ENCODE measurements at regions of chr20 and their contacts with region 1.

Region 1: DNA sequence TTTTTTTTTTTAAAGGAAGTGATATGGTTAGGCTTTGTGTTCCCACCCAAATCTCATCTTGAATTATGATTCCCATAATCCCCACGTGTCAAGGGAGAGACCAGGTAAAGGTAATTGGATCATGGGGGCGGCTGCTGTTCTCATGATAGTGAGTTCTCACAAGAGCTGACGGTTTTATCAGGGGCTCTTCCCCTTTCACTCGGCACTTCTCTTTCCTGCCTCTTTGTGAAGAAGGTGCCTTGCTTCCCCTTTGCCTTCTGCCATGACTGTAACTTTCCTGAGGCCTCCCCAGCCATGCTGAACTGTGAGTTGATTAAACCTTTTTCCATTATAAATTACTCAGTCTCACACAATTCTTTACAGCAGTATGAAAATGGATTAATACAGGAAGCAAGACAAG is 64.3 kb downstream of the ZFP64 start:
- DNase-seq: no peak
- ATAC-seq: no peak
- H3K4me3 Mint-ChIP-seq: no peak overlapping the region
- H3K27ac Mint-ChIP-seq: no peak overlapping the region
- H3K4me1 Mint-ChIP-seq: peaks cover 2% of the 10 kb centered on the region
- H3K27me3 Mint-ChIP-seq: no peaks in the 10 kb centered on the region

Region 2: GRCh38 chr20:52096117-52096516 is 31.2 kb before region 1 on chr20:
- CTCF ChIA-PET with region 1: no interaction called
- POLR2A ChIA-PET with region 1: no interaction called
- intact Hi-C with region 1: no loop called
- DNase-seq: no peak
- ATAC-seq: no peak
- H3K4me3 Mint-ChIP-seq: no peak overlapping the region
- H3K27ac Mint-ChIP-seq: no peak overlapping the region
- H3K4me1 Mint-ChIP-seq: no peaks in the 10 kb centered on the region
- H3K27me3 Mint-ChIP-seq: no peaks in the 10 kb centered on the region

Region 3: GRCh38 chr20:52150440-52151258 is 23.3 kb after region 1 on chr20:
- CTCF ChIA-PET with region 1: interaction called, 15 read pairs
- POLR2A ChIA-PET with region 1: no interaction called
- intact Hi-C with region 1: loop called (anchors 1 kb)
- DNase-seq: peak; percentile 33
- ATAC-seq: peak; percentile 53
- H3K4me3 Mint-ChIP-seq: no peak overlapping the region
- H3K27ac Mint-ChIP-seq: no peak overlapping the region
- H3K4me1 Mint-ChIP-seq: no peaks in the 10 kb centered on the region
- H3K27me3 Mint-ChIP-seq: no peaks in the 10 kb centered on the region

Region 4: DNA sequence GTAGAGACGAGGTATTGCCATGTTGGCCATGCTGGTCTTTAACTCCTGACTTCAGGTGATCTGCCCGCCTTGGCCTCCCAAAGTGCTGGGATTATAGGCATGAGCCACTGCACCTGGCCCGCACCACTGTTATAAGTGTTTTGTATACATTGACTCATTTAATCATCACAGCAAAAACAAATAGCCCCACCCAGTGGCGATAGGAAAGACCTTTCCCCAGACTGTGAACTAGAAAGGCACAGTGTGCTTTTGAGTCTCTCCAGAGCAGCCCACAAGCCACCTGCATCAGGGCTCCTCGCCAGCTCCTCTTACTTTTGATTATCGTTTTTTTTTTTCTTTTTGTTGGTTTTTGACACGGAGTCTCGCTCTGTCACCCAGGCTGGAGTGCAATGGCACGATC is 92.1 kb after region 1 on chr20:
- CTCF ChIA-PET with region 1: no interaction called
- POLR2A ChIA-PET with region 1: no interaction called
- intact Hi-C with region 1: loop called in 1 of 2 experiments (anchors 2 kb)
- DNase-seq: peak; percentile 9
- ATAC-seq: no peak
- H3K4me3 Mint-ChIP-seq: no peak overlapping the region
- H3K27ac Mint-ChIP-seq: no peak overlapping the region
- H3K4me1 Mint-ChIP-seq: no peaks in the 10 kb centered on the region
- H3K27me3 Mint-ChIP-seq: peaks cover 9% of the 10 kb centered on the region

Region 5: GRCh38 chr20:52379723-52380336 is 252.5 kb after region 1 on chr20:
- CTCF ChIA-PET with region 1: no interaction called
- POLR2A ChIA-PET with region 1: no interaction called
- intact Hi-C with region 1: loop called in 1 of 2 experiments (anchors 1 kb)
- DNase-seq: peak; percentile 54
- ATAC-seq: no peak
- H3K4me3 Mint-ChIP-seq: no peak overlapping the region
- H3K27ac Mint-ChIP-seq: no peak overlapping the region
- H3K4me1 Mint-ChIP-seq: peaks cover 23% of the 10 kb centered on the region
- H3K27me3 Mint-ChIP-seq: no peaks in the 10 kb centered on the region

Region 6: GRCh38 chr20:52649727-52650126 is 522.4 kb after region 1 on chr20:
- CTCF ChIA-PET with region 1: no interaction called
- POLR2A ChIA-PET with region 1: no interaction called
- intact Hi-C with region 1: no loop called
- DNase-seq: no peak
- ATAC-seq: no peak
- H3K4me3 Mint-ChIP-seq: no peak overlapping the region
- H3K27ac Mint-ChIP-seq: no peak overlapping the region
- H3K4me1 Mint-ChIP-seq: no peaks in the 10 kb centered on the region
- H3K27me3 Mint-ChIP-seq: no peaks in the 10 kb centered on the region

Region 7: DNA sequence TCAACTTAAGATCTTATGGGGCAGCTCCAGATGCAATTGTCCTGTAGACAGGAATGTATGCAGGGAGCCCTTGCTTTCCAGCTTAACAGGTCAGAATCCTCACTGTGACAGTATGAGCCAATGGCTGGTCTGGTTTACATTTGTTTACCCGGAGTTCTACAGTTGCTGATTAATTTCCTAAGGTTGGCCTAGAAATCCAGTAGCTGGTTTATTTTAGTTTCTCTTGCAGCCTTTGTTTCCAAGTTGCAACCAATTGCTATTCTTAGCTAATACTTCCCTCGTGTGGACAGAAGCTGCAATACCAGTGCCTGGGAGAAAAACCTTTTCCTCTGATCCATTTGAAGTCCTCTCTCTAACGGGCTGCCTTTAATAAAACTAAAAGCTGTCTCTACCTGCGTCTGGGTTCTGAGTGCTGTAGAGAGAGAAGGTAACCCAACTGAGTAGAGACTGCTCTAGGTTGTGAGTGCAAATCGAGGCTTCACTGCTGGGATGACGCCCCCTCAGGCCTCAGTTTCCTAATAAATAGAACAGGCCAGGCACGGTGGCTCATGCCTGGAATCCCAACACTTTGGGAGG is 1420.4 kb after region 1 on chr20:
- CTCF ChIA-PET with region 1: interaction called, 4 read pairs
- POLR2A ChIA-PET with region 1: no interaction called
- intact Hi-C with region 1: loop called in 1 of 2 experiments (anchors 5 kb)
- DNase-seq: peak; percentile 63
- ATAC-seq: peak; percentile 55
- H3K4me3 Mint-ChIP-seq: no peak overlapping the region
- H3K27ac Mint-ChIP-seq: no peak overlapping the region
- H3K4me1 Mint-ChIP-seq: peaks cover 2% of the 10 kb centered on the region
- H3K27me3 Mint-ChIP-seq: no peaks in the 10 kb centered on the region

Measured in activated CD4-positive, alpha-beta T cell treated with anti-CD3 and anti-CD28 coated beads for 36 hours (primary cell).